ENCODE measurements at regions of chrX and their contacts with region 1.

Region 1: DNA sequence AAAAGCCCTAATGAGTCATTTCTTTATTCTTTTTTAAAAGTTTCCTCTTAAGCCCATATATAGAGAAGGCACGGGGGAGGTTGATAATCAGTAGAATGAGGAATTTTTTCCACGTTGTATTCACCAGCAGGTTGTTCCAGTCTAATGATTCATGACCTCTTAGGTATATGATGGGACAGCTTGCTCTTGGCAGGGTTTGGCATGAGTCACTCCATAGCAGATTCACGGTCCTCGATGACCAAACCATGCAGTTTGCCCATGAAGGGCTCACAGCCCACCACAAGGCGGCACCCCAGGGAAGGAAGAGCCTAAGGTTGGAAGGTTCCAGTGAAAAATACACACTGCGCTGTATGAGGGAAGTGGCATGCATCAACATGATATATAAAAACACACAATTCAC is 623.8 kb upstream of the DIPK2B start:
- DNase-seq: peak; percentile 95
- H3K4me3 Mint-ChIP-seq: no peak overlapping the region
- H3K27ac Mint-ChIP-seq: peak overlapping the region; percentile 55
- H3K4me1 Mint-ChIP-seq: peaks cover 13% of the 10 kb centered on the region
- H3K27me3 Mint-ChIP-seq: peaks cover 8% of the 10 kb centered on the region
- CTCF ChIP-seq: peak; percentile 65

Region 2: GRCh38 chrX:45322382-45322781 is 502.1 kb before region 1 on chrX:
- CTCF ChIA-PET with region 1: interaction called, 5 read pairs
- POLR2A ChIA-PET with region 1: no interaction called
- intact Hi-C with region 1: loop called (anchors 1 kb)
- DNase-seq: peak; percentile 77
- H3K4me3 Mint-ChIP-seq: no peak overlapping the region
- H3K27ac Mint-ChIP-seq: no peak overlapping the region
- H3K4me1 Mint-ChIP-seq: no peaks in the 10 kb centered on the region
- H3K27me3 Mint-ChIP-seq: peaks cover 68% of the 10 kb centered on the region
- CTCF ChIP-seq: peak; percentile 63

Region 3: DNA sequence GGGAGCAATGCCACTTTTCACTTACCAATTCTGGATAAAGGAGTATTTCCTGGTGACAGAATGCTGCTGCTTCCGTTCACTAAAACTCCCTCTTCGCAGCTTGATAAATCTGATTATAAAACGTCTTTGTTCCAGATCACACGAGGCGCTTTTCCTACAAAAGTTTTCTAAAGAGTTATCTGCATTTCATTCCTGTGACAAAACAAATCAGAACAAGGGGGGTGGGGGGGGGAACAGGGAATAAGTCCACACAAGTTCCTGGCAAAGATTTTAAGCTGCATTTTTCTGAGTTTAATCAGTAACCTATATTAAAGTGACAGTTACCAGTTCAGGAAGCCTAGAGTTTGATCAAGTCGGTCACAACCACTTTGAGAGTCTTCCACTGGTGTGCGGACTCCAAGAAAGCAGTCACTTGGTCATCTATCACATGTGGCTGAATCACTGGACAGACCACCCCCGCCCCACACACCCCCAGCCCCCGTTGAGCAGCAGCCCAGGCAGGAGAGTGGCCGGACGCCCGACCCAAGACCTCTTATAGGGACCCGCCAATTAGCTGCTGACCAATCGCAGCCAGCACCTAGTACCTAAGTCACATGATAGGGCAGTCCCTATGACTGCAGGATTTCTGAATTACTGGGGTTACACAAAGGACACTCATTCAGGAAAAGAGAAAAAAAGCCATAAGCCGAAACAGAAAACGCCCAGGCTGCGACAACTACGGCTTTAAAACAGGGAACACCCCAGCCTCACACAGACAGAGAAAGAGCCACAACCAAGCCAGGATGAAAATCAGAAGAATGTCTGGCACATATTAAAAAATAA is 54.5 kb before region 1 on chrX:
- CTCF ChIA-PET with region 1: no interaction called
- POLR2A ChIA-PET with region 1: interaction called, 11 read pairs
- intact Hi-C with region 1: no loop called
- DNase-seq: peak; percentile 83
- H3K4me3 Mint-ChIP-seq: peak overlapping the region; percentile 74
- H3K27ac Mint-ChIP-seq: peak overlapping the region; percentile 85
- H3K4me1 Mint-ChIP-seq: peaks cover 2% of the 10 kb centered on the region
- H3K27me3 Mint-ChIP-seq: peaks cover 74% of the 10 kb centered on the region
- CTCF ChIP-seq: no peak

Region 4: DNA sequence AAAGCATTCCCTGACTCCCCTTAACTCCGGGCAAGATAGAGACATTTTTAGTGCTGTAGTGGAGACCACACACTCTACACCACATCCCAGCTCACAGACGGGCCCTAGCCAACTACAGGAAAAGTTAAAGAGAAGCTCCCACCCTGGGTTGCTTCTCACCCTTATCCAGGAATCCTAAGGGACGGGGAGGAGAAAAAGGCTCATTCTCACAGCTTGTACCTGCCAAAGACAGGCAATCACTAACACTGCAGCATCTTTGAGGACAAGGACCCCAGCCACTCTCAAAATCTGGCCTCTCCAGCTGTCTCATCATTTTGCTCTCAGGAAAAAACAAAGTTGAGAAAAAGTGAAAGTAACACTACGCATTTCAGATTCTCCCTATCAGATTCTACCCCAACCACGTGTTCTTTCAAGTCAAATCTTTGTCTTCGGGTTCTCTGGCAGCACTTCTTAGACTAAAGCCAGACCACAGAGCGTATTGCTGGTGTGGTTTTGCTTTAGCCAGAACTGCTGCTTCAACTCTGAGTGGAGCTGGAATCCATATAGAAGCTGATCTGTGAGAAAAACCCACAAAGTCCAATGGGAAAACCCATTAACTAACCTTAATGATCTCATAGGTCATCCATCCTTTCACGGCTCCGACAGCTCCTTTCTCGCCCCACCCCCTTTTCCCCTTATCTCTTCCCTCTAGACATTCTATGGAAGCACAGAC is 17.9 kb before region 1 on chrX:
- CTCF ChIA-PET with region 1: interaction called, 10 read pairs
- POLR2A ChIA-PET with region 1: interaction called, 16 read pairs
- intact Hi-C with region 1: loop called (anchors 1 kb)
- DNase-seq: peak; percentile 24
- H3K4me3 Mint-ChIP-seq: peak overlapping the region; percentile 66
- H3K27ac Mint-ChIP-seq: peak overlapping the region; percentile 89
- H3K4me1 Mint-ChIP-seq: peaks cover 19% of the 10 kb centered on the region
- H3K27me3 Mint-ChIP-seq: peaks cover 58% of the 10 kb centered on the region
- CTCF ChIP-seq: no peak

Region 5: DNA sequence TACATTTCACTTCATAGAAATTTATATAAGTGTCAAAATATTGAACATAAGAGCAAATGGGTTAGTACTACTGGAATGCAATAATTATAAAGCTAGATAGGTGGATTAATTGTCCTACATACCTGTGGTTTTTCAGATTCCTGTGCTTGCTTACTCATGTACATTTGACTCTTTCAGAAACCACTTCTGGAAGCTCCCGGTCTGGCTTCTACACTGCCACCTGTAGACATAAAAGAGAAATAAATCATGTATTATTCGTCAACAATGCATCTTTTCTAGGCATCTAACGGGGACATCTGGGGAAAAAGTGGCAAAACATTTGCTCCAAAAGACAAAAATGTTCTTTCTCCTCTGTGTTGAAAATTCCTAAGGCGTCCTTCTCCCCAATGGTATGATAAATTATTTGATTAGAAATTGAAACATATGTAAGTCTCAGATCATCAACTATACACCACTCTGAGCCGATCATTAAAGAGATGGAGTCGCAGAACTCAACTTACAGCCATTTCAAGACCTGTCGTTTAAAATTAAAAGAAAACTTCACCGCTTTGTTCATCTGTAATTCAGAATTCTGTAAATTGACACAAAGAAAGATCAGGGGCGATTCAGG is 24.9 kb after region 1 on chrX:
- CTCF ChIA-PET with region 1: interaction called, 4 read pairs
- POLR2A ChIA-PET with region 1: interaction called, 7 read pairs
- intact Hi-C with region 1: loop called (anchors 2 kb)
- DNase-seq: peak; percentile 75
- H3K4me3 Mint-ChIP-seq: peak overlapping the region; percentile 89
- H3K27ac Mint-ChIP-seq: peak overlapping the region; percentile 67
- H3K4me1 Mint-ChIP-seq: no peaks in the 10 kb centered on the region
- H3K27me3 Mint-ChIP-seq: peaks cover 14% of the 10 kb centered on the region
- CTCF ChIP-seq: peak; percentile 26

Region 6: GRCh38 chrX:46325312-46325877 is 500.9 kb after region 1 on chrX:
- CTCF ChIA-PET with region 1: no interaction called
- POLR2A ChIA-PET with region 1: no interaction called
- intact Hi-C with region 1: loop called (anchors 1 kb)
- DNase-seq: peak; percentile 86
- H3K4me3 Mint-ChIP-seq: peak overlapping the region; percentile 71
- H3K27ac Mint-ChIP-seq: peak overlapping the region; percentile 60
- H3K4me1 Mint-ChIP-seq: peaks cover 24% of the 10 kb centered on the region
- H3K27me3 Mint-ChIP-seq: peaks cover 53% of the 10 kb centered on the region
- CTCF ChIP-seq: no peak